ENCODE measurements at regions of chr12 and their contacts with region 1.

Region 1: GRCh38 chr12:46659824-46660223 is 166.0 kb downstream of the SLC38A4 start:
- DNase-seq: peak in 1 of 2 donors; percentile 36
- H3K4me3 ChIP-seq: no peak overlapping the region
- H3K27ac ChIP-seq: peak overlapping the region in 4 of 5 donors; percentile 16 to 65 (median 60)
- H3K4me1 ChIP-seq: peaks cover 0 to 37% (median 18%) of the 10 kb centered on the region in 4 donors
- H3K27me3 ChIP-seq: no peaks in the 10 kb centered on the region
- CTCF ChIP-seq: no peak
- EP300 ChIP-seq: no peak
- POLR2A ChIP-seq: no peak

Region 2: GRCh38 chr12:46271863-46272262 is 388.0 kb before region 1 on chr12:
- intact Hi-C with region 1: no loop called
- DNase-seq: peak in 1 of 2 donors; percentile 1
- H3K4me3 ChIP-seq: no peak overlapping the region
- H3K27ac ChIP-seq: no peak overlapping the region
- H3K4me1 ChIP-seq: peaks cover 0 to 31% (median 25%) of the 10 kb centered on the region in 4 donors
- H3K27me3 ChIP-seq: peaks cover 0 to 18% (median 4%) of the 10 kb centered on the region in 3 donors
- CTCF ChIP-seq: no peak
- EP300 ChIP-seq: no peak
- POLR2A ChIP-seq: no peak

Region 3: GRCh38 chr12:46342562-46343033 is 317.2 kb before region 1 on chr12:
- intact Hi-C with region 1: loop called (anchors 10 kb)
- DNase-seq: peak; percentile 62 to 67
- H3K4me3 ChIP-seq: no peak overlapping the region
- H3K27ac ChIP-seq: peak overlapping the region in 3 of 5 donors; percentile 27 to 69 (median 45)
- H3K4me1 ChIP-seq: peaks cover 0 to 14% (median 11%) of the 10 kb centered on the region in 4 donors
- H3K27me3 ChIP-seq: no peaks in the 10 kb centered on the region
- CTCF ChIP-seq: peak in 3 of 7 experiments; percentile 42 to 70 (median 55)
- EP300 ChIP-seq: no peak
- POLR2A ChIP-seq: no peak

Region 4: DNA sequence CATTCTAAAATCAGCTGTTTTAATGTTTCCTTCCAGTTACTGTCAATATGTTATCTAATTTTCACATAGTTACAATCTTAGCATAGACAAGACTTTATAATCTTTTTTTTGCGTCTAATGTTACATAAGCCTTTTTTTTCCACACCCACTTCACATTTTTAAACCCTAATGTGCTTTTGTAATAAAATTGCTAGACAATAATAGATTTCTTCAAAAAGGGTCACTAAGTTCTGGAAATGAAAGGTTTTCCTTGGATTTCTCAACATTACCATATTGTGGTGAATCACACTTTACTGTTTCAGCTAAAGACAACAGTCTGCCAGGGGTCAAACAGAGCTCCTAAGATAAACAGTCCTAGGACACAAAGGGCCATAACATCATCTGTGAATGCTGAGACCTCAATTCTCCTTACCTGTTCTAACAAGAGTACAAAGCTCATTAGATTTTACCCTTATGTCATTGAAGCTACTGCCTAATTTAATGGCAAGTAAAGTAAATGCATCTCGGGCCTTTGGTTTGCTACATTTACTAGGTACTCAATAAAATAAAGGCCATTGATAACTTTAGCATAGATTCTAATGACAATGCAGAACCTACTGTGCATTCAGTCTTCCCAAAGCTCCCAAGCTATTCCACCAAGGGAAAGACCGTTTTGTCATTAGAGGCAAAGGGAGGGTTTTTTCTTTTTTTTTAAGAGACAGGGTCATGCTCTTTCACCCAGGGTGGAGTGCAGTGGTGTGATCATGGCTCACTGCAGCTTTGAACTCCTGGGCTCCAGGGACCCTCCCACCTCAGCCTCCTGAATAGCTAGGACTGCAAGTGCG is 176.0 kb before region 1 on chr12:
- intact Hi-C with region 1: no loop called
- DNase-seq: no peak
- H3K4me3 ChIP-seq: no peak overlapping the region
- H3K27ac ChIP-seq: no peak overlapping the region
- H3K4me1 ChIP-seq: peaks cover 0 to 16% (median 0%) of the 10 kb centered on the region in 4 donors
- H3K27me3 ChIP-seq: no peaks in the 10 kb centered on the region
- CTCF ChIP-seq: no peak
- EP300 ChIP-seq: no peak
- POLR2A ChIP-seq: no peak

Region 5: DNA sequence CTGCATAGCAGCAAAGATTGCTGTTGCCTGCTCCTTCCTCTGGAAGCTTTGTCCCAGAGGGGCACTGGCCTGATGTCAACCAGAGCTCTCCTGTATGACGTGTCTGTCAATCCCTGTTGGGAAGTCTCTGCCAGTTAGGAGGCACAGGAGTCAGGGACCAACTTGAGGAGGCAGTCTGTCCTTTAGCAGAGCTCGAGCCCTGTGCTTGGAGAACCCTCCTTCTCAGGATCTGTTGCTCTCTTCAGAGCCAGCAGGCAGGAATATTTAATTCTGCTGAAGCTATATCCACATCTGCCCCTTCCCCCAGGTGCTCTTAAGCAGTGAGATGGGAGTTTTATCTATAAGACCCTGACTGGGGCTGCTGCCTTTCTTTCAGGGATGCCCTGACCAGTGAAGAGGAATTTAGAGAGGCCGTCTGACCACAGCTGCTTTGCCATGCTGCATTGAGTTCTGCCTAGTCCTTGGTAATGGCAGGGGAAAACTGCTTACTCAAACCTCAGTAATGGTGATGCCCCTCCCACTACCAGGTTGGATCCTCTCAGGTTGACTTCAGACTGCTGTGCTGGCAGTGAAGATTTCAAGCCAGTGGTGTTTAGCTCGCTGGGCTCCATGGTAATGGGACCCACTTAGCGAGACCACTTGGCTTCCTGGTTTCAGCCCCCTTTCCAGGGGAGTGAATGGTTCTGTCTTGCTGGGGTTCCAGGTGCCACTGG is 68.7 kb before region 1 on chr12:
- intact Hi-C with region 1: no loop called
- DNase-seq: no peak
- H3K4me3 ChIP-seq: no peak overlapping the region
- H3K27ac ChIP-seq: no peak overlapping the region
- H3K4me1 ChIP-seq: peaks cover 2% of the 10 kb centered on the region in 4 donors
- H3K27me3 ChIP-seq: no peaks in the 10 kb centered on the region
- CTCF ChIP-seq: no peak
- EP300 ChIP-seq: no peak
- POLR2A ChIP-seq: no peak

Region 6: DNA sequence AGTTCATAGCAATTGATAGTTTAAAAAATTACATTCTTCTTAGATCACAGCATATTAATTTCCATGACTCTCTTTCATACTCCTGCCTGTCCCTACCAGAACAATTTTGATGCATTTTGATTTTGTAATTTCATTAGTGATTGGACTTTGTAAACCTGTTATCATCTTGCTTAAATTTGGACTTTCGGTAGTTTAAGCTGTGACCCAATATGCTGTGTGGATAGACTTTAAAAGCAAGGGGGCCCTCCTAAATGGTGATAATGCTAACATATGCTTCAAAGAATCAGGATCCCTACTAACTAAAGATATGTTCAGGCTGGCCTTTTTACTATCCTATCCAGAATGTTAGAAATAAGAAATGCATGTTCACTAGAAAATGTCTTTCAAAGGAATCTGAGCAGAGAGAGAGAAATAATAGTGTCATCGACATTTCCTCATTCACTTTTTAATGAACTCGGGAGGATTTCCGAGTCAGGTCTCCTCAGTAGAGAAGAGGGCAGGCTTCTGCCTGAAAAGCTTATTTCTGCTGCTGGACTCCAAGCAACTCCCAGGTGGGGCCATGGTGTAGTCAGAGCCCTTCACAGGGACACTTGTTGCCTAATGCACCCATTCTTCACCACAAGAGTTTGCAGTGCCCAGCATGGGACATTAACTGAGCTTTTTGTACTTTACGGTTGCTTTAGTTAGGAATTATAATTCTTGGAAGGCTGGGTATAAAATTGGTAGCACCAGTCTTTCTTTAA is 149.3 kb after region 1 on chr12:
- intact Hi-C with region 1: no loop called
- DNase-seq: no peak
- H3K4me3 ChIP-seq: no peak overlapping the region
- H3K27ac ChIP-seq: no peak overlapping the region
- H3K4me1 ChIP-seq: no peaks in the 10 kb centered on the region
- H3K27me3 ChIP-seq: no peaks in the 10 kb centered on the region
- CTCF ChIP-seq: no peak
- EP300 ChIP-seq: no peak
- POLR2A ChIP-seq: no peak

Measured in stomach (tissue), 19 donors.